ENCODE measurements at regions of chr4 and their contacts with region 1.

Region 1: GRCh38 chr4:119041951-119042560 is 93.6 kb upstream of the MYOZ2 start:
- DNase-seq: peak; percentile 85
- H3K4me3 Mint-ChIP-seq: no peak overlapping the region
- H3K27ac Mint-ChIP-seq: no peak overlapping the region
- H3K4me1 Mint-ChIP-seq: peaks cover 5% of the 10 kb centered on the region
- H3K27me3 Mint-ChIP-seq: peaks cover 4% of the 10 kb centered on the region

Region 2: DNA sequence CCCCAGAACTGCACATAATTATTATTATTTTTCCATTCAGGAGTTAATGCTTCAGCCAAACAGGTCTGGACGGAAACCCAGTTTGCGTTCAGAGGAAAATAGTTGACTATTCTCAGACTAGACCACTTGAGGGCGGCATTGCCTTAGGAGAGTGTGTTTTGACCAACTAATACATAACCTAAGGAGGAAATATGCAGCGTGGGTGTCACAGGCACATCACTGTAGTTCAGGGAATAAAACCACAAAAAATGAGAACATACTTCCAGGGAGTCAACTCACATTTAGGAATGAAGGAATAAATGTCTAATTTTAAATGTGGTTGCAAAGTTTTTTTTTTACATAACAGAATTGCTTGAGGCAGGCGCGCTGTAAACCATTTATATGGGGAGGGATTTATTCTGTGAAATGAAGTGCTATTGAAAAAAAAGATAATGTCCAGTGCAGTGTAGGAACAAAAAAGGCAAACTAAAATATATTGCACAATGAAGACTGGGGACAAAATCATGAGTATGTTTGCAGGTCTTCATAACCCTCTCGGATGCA is 60.1 kb before region 1 on chr4:
- intact Hi-C with region 1: loop called (anchors 2 kb)
- DNase-seq: peak; percentile 84
- H3K4me3 Mint-ChIP-seq: no peak overlapping the region
- H3K27ac Mint-ChIP-seq: no peak overlapping the region
- H3K4me1 Mint-ChIP-seq: no peaks in the 10 kb centered on the region
- H3K27me3 Mint-ChIP-seq: peaks cover 14% of the 10 kb centered on the region

Region 3: GRCh38 chr4:119286377-119287002 is 244.4 kb after region 1 on chr4:
- intact Hi-C with region 1: loop called (anchors 1 kb)
- DNase-seq: peak; percentile 78
- H3K4me3 Mint-ChIP-seq: no peak overlapping the region
- H3K27ac Mint-ChIP-seq: no peak overlapping the region
- H3K4me1 Mint-ChIP-seq: peaks cover 14% of the 10 kb centered on the region
- H3K27me3 Mint-ChIP-seq: no peaks in the 10 kb centered on the region